ENCODE measurements at regions of chr12 and their contacts with region 1.

Region 1: GRCh38 chr12:109899783-109900751 is at the start of gene TCHP:
- DNase-seq: peak; percentile 86
- H3K4me3 Mint-ChIP-seq: peak within 1 kb of the TSS; percentile 94
- H3K27ac Mint-ChIP-seq: peak within 1 kb of the TSS; percentile 97
- H3K4me1 Mint-ChIP-seq: peaks cover 21% of the 10 kb centered on the region
- H3K27me3 Mint-ChIP-seq: no peaks in the 10 kb centered on the region
- total RNA-seq, gene TCHP: 19.6 to 20.9 TPM

Region 2: GRCh38 chr12:109052414-109053323 is 847.4 kb before region 1 on chr12 and contains the start of gene USP30:
- CTCF ChIA-PET with region 1: no interaction called
- intact Hi-C with region 1: no loop called
- DNase-seq: peak; percentile 87
- H3K4me3 Mint-ChIP-seq: peak within 1 kb of the TSS; percentile 84
- H3K27ac Mint-ChIP-seq: peak within 1 kb of the TSS; percentile 96
- H3K4me1 Mint-ChIP-seq: peaks cover 8% of the 10 kb centered on the region
- H3K27me3 Mint-ChIP-seq: no peaks in the 10 kb centered on the region
- total RNA-seq, gene USP30: 11.0 to 11.5 TPM

Region 3: DNA sequence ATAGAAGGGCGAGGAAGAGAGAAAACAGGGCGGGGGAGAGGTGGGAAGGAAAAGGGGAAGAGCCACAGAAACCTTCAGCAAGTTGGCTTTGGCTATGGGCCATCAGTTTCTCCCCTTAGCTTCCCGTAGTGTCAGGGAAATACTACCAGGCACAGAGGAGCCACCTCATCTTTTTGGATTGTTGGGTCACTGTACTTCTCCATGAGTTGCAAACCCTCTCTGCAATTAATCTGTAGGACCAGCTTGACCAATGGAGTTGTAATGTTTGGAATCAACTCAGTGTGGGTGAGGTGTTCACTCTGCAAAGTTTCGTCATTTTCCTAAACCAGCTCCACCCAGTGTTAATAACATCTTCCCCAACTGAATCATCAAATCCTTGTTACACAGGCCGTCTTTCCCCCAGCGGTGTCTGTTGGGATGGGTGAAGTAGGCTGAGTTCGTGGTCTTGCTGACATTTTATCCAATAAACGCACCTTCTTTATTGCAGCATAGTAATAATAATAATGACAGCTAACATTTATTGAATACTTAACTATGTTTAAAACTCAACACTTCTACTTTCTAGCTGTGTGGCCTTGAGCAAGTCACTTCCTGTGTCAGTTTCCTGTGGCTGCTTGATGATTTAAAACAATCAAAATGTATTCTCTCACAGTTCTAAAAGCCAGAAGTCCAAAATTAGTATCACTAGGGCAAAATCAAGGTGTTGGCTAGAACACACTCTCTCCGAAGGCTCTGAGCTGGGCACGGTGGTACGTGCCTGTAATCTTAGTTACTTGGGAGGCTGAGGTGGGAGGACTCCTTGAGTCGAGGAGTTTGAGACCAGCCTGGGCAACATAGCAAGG is 11.7 kb before region 1 on chr12:
- CTCF ChIA-PET with region 1: interaction called, 3 read pairs
- intact Hi-C with region 1: loop called (anchors 1 kb)
- DNase-seq: peak; percentile 73
- H3K4me3 Mint-ChIP-seq: peak overlapping the region; percentile 39
- H3K27ac Mint-ChIP-seq: peak overlapping the region; percentile 93
- H3K4me1 Mint-ChIP-seq: peaks cover 35% of the 10 kb centered on the region
- H3K27me3 Mint-ChIP-seq: no peaks in the 10 kb centered on the region

Region 4: GRCh38 chr12:109927622-109928021 is 27.6 kb after region 1 on chr12:
- CTCF ChIA-PET with region 1: interaction called, 3 read pairs
- intact Hi-C with region 1: loop called (anchors 1 kb)
- DNase-seq: peak; percentile 57
- H3K4me3 Mint-ChIP-seq: no peak overlapping the region
- H3K27ac Mint-ChIP-seq: no peak overlapping the region
- H3K4me1 Mint-ChIP-seq: no peaks in the 10 kb centered on the region
- H3K27me3 Mint-ChIP-seq: no peaks in the 10 kb centered on the region

Measured in activated naive CD4-positive, alpha-beta T cell treated with anti-CD3 and anti-CD28 coated beads for 36 hours (primary cell).